Spleen (tissue), 13 donors: ENCODE measurements at regions of chr7 and their contacts with region 1.

Region 1: DNA sequence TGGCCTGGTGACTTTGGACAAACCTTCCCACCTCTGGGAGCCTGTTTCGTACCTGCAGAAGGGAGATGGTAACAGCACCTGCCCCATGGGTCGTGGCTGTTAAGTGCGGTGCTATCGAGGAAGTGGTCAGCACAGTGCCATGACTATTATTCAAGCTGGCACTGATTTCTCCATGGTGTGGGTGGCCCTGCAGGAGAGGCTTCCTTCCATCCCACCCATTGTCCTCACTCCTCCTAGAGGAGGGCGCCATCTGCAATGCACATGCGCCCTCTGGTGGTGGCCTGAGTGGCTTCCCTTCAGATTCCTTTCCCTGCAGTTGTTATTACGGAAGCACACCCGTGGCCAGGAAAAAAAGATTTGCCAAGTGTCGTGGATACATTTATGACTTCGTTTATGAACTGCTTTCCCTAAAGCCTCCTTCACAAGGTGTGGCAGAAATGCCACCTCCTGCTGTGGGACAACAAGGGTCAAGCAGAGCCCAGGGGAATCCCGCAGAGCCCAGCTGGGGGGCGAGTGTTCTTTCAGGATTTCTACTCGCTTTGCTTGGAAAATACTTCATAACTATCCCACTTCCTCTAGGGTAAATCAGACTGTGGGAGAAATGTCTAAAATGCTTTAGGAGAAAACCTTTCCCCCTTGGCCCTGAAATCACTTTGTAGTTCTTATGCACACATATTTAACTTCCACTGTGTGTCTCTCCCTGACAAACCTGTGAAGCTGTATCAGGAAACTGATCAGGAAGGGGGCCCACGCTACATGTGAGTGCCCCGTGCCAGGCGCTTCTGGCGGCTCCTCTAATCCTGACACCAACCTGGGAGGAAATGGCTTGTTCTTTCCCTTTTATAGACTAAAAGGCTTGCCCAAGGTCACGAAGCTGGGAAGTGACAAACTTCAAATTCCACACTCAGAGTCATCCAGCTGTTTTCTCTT is 98.0 kb upstream of the ANLN start:
- DNase-seq: peak; percentile 93
- H3K4me3 ChIP-seq: peak overlapping the region in 3 of 8 donors; percentile 4 to 54 (median 21)
- H3K27ac ChIP-seq: peak overlapping the region; percentile 73 to 88 (median 82)
- H3K4me1 ChIP-seq: peaks cover 12 to 52% (median 35%) of the 10 kb centered on the region in 6 donors
- H3K27me3 ChIP-seq: peaks cover 0 to 3% (median 0%) of the 10 kb centered on the region in 7 donors
- CTCF ChIP-seq: peak; percentile 89 to 98 (median 96)
- POLR2A ChIP-seq: no peak

Region 2: GRCh38 chr7:35985126-35985754 is 306.4 kb before region 1 on chr7:
- intact Hi-C with region 1: loop called (anchors 2 kb)
- DNase-seq: peak; percentile 93
- H3K4me3 ChIP-seq: no peak overlapping the region
- H3K27ac ChIP-seq: no peak overlapping the region
- H3K4me1 ChIP-seq: peaks cover 0 to 6% (median 0%) of the 10 kb centered on the region in 6 donors
- H3K27me3 ChIP-seq: no peaks in the 10 kb centered on the region
- CTCF ChIP-seq: peak; percentile 84 to 96 (median 90)
- POLR2A ChIP-seq: no peak

Region 3: DNA sequence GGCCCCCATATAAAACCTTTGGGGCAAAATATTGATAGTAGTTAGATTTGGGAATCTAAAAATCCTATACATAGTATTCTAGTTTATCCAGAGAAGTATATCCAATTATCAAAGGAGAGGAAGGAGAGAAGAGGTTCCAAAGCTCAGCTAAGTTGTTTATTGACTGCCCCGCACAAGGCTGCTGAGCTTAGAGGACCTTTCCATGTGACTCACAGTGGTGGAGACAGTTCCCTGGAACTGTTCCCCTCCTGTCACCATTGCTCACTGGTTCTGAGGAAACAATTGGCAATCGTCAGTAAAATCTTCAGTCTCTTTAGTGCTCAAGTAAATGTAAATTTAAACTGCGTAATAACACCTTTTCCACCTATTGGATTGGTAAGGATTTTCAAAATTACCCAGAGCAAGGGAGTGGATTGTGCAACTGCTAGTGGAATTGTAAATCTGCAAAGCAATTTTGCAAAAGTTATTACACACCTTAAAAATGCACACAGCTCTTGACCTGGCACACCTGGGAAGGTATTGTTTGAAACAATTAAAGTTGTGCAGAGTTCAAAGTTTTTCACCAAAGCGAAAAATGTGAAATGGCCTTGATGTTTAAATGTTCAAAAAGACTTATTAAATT is 75.5 kb before region 1 on chr7:
- intact Hi-C with region 1: no loop called
- DNase-seq: no peak
- H3K4me3 ChIP-seq: no peak overlapping the region
- H3K27ac ChIP-seq: no peak overlapping the region
- H3K4me1 ChIP-seq: peaks cover 0 to 2% (median 0%) of the 10 kb centered on the region in 6 donors
- H3K27me3 ChIP-seq: no peaks in the 10 kb centered on the region
- CTCF ChIP-seq: no peak
- POLR2A ChIP-seq: no peak

Region 4: GRCh38 chr7:36227223-36227622 is 64.4 kb before region 1 on chr7:
- intact Hi-C with region 1: no loop called
- DNase-seq: no peak
- H3K4me3 ChIP-seq: no peak overlapping the region
- H3K27ac ChIP-seq: no peak overlapping the region
- H3K4me1 ChIP-seq: peaks cover 0 to 6% (median 0%) of the 10 kb centered on the region in 6 donors
- H3K27me3 ChIP-seq: no peaks in the 10 kb centered on the region
- CTCF ChIP-seq: no peak
- POLR2A ChIP-seq: no peak